Activated CD4-positive, alpha-beta memory T cell treated with anti-CD3 and anti-CD28 coated beads for 36 hours (primary cell): ENCODE measurements at regions of chr2 and their contacts with region 1.

Region 1: DNA sequence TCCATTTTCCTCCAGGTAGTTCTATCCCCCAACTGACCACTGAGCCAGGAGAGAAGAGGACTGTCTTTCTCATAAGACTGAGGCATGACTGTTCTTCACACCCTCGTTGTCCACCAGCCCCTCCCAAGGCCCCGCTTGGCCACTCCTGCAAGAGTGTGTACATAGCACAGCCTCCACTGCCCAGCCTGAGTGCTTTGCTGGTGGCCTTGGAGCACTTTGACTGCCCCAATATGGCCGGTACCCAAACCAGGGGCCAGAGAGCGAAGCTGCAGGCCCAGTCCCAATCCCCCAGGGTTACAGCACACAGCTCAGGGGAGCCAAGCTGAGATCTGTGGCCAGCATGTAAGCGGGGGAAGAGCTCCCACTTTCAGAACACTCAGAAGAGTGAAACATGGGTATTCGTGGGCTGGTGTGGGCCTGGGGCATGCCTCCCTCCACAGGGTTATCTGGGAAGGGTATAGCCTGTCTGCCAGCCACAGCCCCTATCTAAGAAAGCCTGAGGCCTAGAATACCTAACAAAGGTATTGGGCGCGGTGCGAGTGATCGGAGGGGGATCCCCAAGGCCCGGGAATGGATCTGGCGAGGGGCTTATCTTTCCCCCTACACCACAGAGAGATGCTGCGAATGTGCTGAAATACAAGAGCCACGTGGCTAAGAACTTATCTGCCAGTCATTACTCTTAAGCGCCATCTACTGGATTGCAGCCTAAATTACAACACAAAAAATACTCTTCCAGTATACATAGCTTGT is 163.8 kb downstream of the WDPCP start:
- DNase-seq: no peak
- H3K4me3 Mint-ChIP-seq: no peak overlapping the region
- H3K27ac Mint-ChIP-seq: no peak overlapping the region
- H3K4me1 Mint-ChIP-seq: no peaks in the 10 kb centered on the region
- H3K27me3 Mint-ChIP-seq: no peaks in the 10 kb centered on the region

Region 2: DNA sequence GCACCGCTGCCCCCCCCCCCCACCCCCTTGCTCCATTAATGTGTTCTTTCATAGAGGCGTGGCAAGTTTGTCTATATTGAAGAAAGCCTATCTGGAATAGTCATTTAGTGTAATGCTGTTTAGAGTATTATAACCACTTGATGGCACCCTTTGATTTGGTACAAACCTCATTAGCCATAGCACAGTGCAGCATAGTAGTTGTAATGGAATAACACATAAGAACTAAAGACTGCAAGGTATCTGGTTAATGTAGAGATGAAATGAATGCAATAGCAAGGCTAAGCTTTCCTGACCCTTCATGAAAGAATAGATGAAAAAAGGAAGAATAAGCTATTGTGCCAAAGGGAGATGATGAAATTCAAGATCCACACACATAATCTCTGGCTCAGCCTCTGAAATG is 637.1 kb before region 1 on chr2:
- CTCF ChIA-PET with region 1: interaction called, 13 read pairs
- POLR2A ChIA-PET with region 1: no interaction called
- intact Hi-C with region 1: loop called (anchors 2 kb)
- DNase-seq: no peak
- H3K4me3 Mint-ChIP-seq: no peak overlapping the region
- H3K27ac Mint-ChIP-seq: no peak overlapping the region
- H3K4me1 Mint-ChIP-seq: peaks cover 10% of the 10 kb centered on the region
- H3K27me3 Mint-ChIP-seq: no peaks in the 10 kb centered on the region

Region 3: GRCh38 chr2:62856228-62857040 is 568.1 kb before region 1 on chr2:
- CTCF ChIA-PET with region 1: no interaction called
- POLR2A ChIA-PET with region 1: no interaction called
- intact Hi-C with region 1: no loop called
- DNase-seq: no peak
- H3K4me3 Mint-ChIP-seq: no peak overlapping the region
- H3K27ac Mint-ChIP-seq: no peak overlapping the region
- H3K4me1 Mint-ChIP-seq: no peaks in the 10 kb centered on the region
- H3K27me3 Mint-ChIP-seq: no peaks in the 10 kb centered on the region

Region 4: DNA sequence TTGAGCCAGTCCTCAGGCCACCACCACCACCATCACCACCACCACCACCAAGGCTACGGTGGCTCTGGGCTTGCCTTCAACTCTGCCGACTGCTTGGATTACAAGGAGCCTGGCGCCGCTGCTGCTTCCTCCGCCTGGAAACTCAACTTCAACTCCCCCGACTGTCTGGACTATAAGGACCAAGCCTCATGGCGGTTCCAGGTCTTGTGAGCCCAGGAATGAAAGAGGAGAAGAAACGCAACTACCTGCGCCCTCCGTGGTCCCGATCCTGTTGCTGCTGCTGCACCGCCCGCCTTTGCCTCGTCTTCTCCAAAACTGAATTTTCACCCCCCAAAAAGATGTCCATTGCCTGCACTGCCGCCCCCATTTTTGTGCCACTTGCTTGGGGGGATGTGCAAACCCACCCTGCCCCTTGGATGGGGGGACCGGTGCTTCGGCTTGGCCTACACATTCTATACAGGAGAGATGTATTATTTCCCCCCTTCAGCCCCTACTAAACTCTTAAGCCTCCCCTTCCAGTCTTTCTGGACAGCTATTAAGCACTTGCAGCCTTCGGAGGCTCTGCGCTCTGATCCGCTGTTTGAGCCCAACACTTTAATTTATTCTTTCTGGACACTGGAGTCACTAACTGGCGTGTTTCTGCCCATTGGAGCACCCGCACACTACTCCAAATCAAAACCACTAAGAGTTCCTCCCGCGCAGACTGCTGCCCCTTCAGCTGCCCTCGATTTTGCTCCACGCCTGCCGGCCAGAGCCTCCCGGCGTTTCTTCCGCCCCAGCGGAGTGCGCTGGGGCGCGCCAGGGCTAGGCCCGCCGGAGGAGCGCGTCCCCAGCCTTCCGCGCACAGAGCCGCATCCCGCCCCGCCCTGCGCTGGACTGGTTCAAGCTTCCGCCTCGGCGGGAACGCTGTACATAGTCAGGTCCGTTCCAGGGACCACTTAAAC is 368.1 kb before region 1 on chr2:
- CTCF ChIA-PET with region 1: no interaction called
- POLR2A ChIA-PET with region 1: no interaction called
- intact Hi-C with region 1: loop called (anchors 5 kb)
- DNase-seq: peak; percentile 45
- H3K4me3 Mint-ChIP-seq: peak overlapping the region; percentile 30
- H3K27ac Mint-ChIP-seq: no peak overlapping the region
- H3K4me1 Mint-ChIP-seq: peaks cover 63% of the 10 kb centered on the region
- H3K27me3 Mint-ChIP-seq: peaks cover 77% of the 10 kb centered on the region

Region 5: GRCh38 chr2:63403820-63404219 is 20.7 kb before region 1 on chr2:
- CTCF ChIA-PET with region 1: no interaction called
- POLR2A ChIA-PET with region 1: no interaction called
- intact Hi-C with region 1: no loop called
- DNase-seq: no peak
- H3K4me3 Mint-ChIP-seq: no peak overlapping the region
- H3K27ac Mint-ChIP-seq: no peak overlapping the region
- H3K4me1 Mint-ChIP-seq: no peaks in the 10 kb centered on the region
- H3K27me3 Mint-ChIP-seq: no peaks in the 10 kb centered on the region

Region 6: GRCh38 chr2:63440612-63441011 is 16.1 kb after region 1 on chr2:
- CTCF ChIA-PET with region 1: interaction called, 19 read pairs
- POLR2A ChIA-PET with region 1: no interaction called
- intact Hi-C with region 1: no loop called
- DNase-seq: no peak
- H3K4me3 Mint-ChIP-seq: no peak overlapping the region
- H3K27ac Mint-ChIP-seq: no peak overlapping the region
- H3K4me1 Mint-ChIP-seq: peaks cover 11% of the 10 kb centered on the region
- H3K27me3 Mint-ChIP-seq: no peaks in the 10 kb centered on the region

Region 7: DNA sequence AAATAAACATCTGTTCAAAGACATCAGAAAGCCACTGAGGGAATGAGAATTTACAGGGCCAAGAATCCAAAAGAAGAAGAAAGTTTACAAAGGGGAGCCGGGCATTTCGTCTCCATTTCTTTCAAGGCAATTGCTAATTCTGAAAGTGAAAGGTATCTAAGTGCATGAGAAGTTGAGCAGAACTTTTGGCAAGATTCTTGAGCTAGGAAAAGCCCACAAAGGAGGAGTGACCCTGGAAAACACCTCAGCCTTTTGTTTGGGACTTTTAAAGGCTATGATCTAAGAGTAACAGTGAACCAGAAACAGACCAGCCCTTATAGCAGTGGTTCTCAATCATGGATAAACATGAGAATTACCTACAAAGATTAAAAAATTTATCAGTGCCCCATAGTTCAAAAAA is 251.6 kb after region 1 on chr2:
- CTCF ChIA-PET with region 1: no interaction called
- POLR2A ChIA-PET with region 1: no interaction called
- intact Hi-C with region 1: no loop called
- DNase-seq: no peak
- H3K4me3 Mint-ChIP-seq: no peak overlapping the region
- H3K27ac Mint-ChIP-seq: no peak overlapping the region
- H3K4me1 Mint-ChIP-seq: peaks cover 11% of the 10 kb centered on the region
- H3K27me3 Mint-ChIP-seq: peaks cover 15% of the 10 kb centered on the region